ENCODE measurements at regions of chr11 and their contacts with region 1.

Region 1: GRCh38 chr11:60130496-60130895 is 42.0 kb downstream of the MS4A2 start:
- DNase-seq: peak; percentile 59
- H3K4me3 Mint-ChIP-seq: no peak overlapping the region
- H3K27ac Mint-ChIP-seq: peak overlapping the region; percentile 38
- H3K4me1 Mint-ChIP-seq: peaks cover 46% of the 10 kb centered on the region
- H3K27me3 Mint-ChIP-seq: no peaks in the 10 kb centered on the region
- CTCF ChIP-seq: peak; percentile 50

Region 2: DNA sequence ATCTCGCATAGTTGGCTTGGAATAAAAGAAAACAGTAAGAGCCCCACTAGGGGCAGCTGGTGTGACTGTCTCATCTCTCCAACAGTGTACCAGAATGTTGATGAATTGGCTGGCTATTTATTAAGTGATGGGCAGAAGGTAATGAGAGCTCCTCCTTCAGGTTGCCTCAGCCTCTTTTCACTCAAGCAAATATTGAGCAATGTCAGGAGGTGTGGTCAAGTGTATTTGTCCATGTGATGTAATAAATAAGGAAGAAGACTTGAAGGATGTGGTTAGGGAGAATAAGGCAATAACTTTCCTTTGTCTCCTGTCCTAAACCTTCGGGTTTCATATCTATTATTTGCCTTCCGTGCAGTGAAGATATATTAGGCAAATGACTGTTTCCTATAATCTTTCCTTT is 264.1 kb before region 1 on chr11 and contains the start of gene TCN1:
- CTCF ChIA-PET with region 1: interaction called, 4 read pairs
- intact Hi-C with region 1: loop called (anchors 2 kb)
- DNase-seq: peak; percentile 71
- H3K4me3 Mint-ChIP-seq: peak within 1 kb of the TSS; percentile 69
- H3K27ac Mint-ChIP-seq: peak within 1 kb of the TSS; percentile 92
- H3K4me1 Mint-ChIP-seq: peaks cover 18% of the 10 kb centered on the region
- H3K27me3 Mint-ChIP-seq: no peaks in the 10 kb centered on the region
- CTCF ChIP-seq: no peak
- total RNA-seq, gene TCN1: 335 and 428 TPM in 2 replicates

Region 3: DNA sequence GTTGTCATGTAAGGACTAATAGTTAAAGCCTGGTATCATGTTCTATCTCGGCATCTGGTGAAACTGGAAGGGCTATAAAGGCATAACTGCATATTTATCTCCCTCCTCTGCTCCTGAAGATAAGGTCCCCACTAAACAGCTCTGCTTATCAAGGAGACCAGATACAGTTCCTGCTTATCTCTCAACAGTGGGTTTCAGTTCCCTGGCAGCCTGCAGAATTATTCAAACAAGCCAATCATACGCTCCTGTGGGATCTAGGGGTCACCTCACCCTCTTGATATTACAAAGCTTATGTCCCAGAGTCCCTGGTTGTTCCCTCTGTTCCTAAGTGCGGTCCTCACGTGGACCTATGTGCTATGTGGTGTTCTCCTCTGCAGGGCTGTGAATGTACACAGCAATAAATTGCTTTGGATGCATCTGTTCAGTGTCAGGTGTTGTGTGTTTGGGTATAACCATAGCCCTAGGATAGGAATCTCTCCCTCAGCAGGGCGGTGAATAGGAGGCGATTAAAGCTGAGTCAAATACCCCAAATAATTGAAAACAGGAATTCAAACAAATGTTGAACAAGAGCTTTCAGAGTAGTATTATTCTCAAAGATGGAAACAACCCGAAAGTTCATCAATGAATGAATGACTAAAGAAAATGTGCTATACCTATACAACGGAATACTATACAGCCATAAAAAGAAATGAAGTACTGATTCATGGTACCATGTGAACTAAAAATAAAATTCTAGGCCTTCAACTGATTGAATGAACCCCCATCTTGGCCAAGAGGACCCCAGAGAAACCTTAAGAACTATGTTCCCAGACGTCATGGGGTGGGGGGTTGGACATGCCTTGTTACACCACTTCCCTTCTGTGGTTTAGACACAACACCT is 169.8 kb before region 1 on chr11:
- CTCF ChIA-PET with region 1: no interaction called
- intact Hi-C with region 1: loop called (anchors 5 kb)
- DNase-seq: no peak
- H3K4me3 Mint-ChIP-seq: no peak overlapping the region
- H3K27ac Mint-ChIP-seq: no peak overlapping the region
- H3K4me1 Mint-ChIP-seq: peaks cover 20% of the 10 kb centered on the region
- H3K27me3 Mint-ChIP-seq: no peaks in the 10 kb centered on the region
- CTCF ChIP-seq: no peak

Region 4: GRCh38 chr11:60169264-60169915 is 38.9 kb after region 1 on chr11:
- CTCF ChIA-PET with region 1: interaction called, 3 read pairs
- intact Hi-C with region 1: loop called (anchors 2 kb)
- DNase-seq: peak; percentile 90
- H3K4me3 Mint-ChIP-seq: no peak overlapping the region
- H3K27ac Mint-ChIP-seq: peak overlapping the region; percentile 81
- H3K4me1 Mint-ChIP-seq: peaks cover 80% of the 10 kb centered on the region
- H3K27me3 Mint-ChIP-seq: no peaks in the 10 kb centered on the region
- CTCF ChIP-seq: peak; percentile 62